HEK293T (cell line): ENCODE measurements at regions of chr3 and their contacts with region 1.

Region 1: DNA sequence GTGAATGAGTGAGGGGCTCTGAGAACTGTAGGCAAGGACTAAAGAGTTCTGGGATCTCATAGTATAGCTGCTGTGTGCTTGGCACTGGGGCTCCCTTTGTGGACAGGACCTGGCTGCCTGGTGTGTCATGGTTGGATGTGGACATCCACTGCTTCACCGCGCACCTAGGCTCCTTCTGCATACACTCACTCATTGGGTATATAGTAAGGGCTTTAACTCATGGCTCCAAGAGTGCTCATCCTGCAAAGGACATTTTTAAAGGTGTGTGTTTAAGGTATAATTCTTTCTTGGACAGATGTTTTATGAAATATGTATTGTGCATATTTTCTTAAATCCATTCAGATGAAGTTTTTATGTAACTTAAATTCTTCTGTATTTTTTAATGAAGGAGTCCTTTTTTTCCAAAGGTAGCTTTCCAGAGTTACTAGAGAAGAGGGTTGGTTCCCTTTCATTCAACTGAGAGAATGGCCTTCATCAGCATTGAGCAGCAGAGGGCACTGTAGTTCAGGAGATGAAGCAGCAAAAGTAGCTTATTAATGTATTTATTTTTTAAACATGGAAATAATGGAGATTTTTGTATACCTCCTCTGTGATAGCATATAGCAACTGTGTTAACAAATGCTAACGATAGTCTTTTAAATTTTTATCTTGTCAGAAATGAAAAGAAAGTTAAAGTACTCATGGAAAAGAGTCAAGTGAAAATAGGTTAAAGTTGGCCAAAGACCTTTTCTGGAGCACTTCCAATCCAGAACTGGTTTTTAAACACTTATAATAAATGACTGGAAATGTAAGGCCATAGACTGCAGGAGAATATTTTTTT is 25.2 kb downstream of the OXNAD1 start:
- DNase-seq: peak; percentile 36

Region 2: DNA sequence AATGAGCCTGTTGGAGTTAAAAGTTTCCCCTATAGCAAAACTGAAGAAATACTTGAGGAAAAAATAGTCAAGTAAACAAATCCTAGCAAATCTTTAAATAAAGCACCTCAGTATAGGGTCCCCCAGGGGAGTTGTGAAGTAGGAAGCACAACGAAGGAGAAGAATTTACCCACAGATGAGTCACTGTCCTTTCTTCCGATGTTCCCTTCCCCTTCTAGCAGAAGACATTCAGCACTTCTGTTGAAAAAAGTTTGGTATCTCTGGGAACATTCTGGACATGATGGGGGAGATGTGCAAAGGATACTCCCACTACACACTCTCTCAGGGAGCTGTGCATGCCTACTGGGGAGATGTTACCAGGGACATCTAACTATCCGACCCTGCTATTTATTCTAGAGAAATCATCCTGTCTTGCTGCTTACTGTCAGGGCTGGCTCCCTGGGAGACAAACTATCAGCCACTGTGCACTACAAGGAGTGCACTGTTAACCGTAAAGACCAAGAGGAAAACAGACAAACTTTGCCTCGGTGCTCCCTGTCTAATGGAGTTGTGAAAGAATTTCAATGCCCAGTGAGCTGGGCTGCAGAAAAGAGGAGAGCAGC is 129.5 kb after region 1 on chr3:
- CTCF ChIA-PET with region 1: no interaction called
- POLR2A ChIA-PET with region 1: no interaction called
- DNase-seq: no peak

Region 3: DNA sequence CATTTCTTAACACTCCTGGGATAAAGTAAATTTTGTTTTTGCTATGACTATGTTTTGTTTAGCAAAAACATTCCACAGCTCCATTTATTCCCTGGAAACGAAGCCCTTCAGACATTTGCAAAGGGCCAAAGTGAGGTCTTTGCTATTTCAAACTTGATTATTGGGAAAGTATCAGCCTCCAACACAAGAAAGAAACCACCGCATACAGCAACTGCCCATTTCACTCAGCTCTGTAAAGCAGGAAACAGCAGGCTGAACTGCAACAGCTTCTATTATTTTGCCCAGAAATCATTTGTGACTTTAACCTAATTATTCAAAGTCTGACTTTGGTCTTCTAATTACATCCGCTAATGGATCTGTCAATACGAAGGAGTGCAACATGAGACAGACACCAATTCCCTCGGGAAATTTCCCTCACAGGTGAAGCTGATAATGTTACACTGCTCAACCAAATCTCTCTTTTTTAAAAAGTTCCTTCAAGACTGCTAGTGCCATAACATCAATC is 151.2 kb after region 1 on chr3:
- CTCF ChIA-PET with region 1: no interaction called
- POLR2A ChIA-PET with region 1: no interaction called
- DNase-seq: no peak

Region 4: GRCh38 chr3:16550676-16551341 is 260.6 kb after region 1 on chr3:
- CTCF ChIA-PET with region 1: interaction called, 11 read pairs
- POLR2A ChIA-PET with region 1: no interaction called
- DNase-seq: peak; percentile 74